MCF 10A (cell line): ENCODE measurements at regions of chr1 and their contacts with region 1.

Region 1: DNA sequence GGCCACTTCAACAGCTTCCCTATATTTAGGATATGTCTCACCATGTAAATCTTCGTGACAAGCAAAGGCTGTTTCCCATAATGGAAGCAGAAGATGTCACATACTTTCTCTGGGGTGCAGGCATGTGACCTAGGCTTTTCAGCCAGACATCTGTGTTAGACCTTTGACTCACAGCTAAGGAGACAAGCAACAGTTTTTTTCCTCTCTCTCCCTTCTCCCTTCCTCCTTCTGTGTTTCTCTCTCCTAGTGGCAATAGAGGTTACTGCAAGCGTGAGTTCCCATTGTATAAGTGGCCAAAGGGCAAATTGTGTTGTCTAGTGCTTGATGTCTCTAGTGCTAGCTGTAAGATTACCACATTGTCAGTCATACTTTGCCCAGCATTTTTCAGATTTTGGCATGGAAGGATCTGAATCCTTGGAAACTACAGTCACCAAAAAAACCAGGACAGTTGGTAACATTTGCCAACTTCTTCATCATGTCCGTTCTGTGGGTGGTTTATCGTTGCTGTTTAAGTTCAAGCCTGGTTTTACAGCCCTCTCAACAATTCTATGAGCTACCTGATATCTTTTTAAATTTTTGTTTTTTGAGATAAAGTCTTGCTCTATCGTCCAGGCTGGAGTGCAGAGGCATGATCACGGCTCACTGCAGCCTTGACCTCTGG is 44.4 kb upstream of the RABGAP1L start:
- DNase-seq: peak; percentile 92
- H3K4me3 Mint-ChIP-seq: no peak overlapping the region
- H3K27ac Mint-ChIP-seq: no peak overlapping the region
- H3K4me1 Mint-ChIP-seq: peaks cover 6% of the 10 kb centered on the region
- H3K27me3 Mint-ChIP-seq: no peaks in the 10 kb centered on the region
- CTCF ChIP-seq: peak; percentile 71

Region 2: GRCh38 chr1:173779936-173780335 is 335.0 kb before region 1 on chr1:
- CTCF ChIA-PET with region 1: no interaction called
- POLR2A ChIA-PET with region 1: no interaction called
- intact Hi-C with region 1: no loop called
- DNase-seq: no peak
- H3K4me3 Mint-ChIP-seq: no peak overlapping the region
- H3K27ac Mint-ChIP-seq: peak overlapping the region; percentile 31
- H3K4me1 Mint-ChIP-seq: no peaks in the 10 kb centered on the region
- H3K27me3 Mint-ChIP-seq: no peaks in the 10 kb centered on the region
- CTCF ChIP-seq: no peak

Region 3: GRCh38 chr1:174159252-174160108 is 44.6 kb after region 1 on chr1 and contains the start of gene RABGAP1L:
- CTCF ChIA-PET with region 1: interaction called, 9 read pairs
- POLR2A ChIA-PET with region 1: interaction called, 4 read pairs
- intact Hi-C with region 1: loop called (anchors 2 kb)
- DNase-seq: peak; percentile 96
- H3K4me3 Mint-ChIP-seq: peak within 1 kb of the TSS; percentile 97
- H3K27ac Mint-ChIP-seq: peak within 1 kb of the TSS; percentile 71
- H3K4me1 Mint-ChIP-seq: peaks cover 42% of the 10 kb centered on the region
- H3K27me3 Mint-ChIP-seq: no peaks in the 10 kb centered on the region
- CTCF ChIP-seq: no peak
- total RNA-seq, gene RABGAP1L: 18.2 and 19.0 TPM in 2 replicates